ENCODE measurements at regions of chr1 and their contacts with region 1.

Region 1: GRCh38 chr1:145999321-146000241 is 3.2 kb upstream of the TXNIP start:
- DNase-seq: peak; percentile 51 to 64 (median 57)
- H3K4me3 ChIP-seq: peak overlapping the region; percentile 18
- H3K27ac ChIP-seq: peak overlapping the region; percentile 37 to 74
- H3K4me1 ChIP-seq: peaks cover 5% of the 10 kb centered on the region
- H3K27me3 ChIP-seq: no peaks in the 10 kb centered on the region
- CTCF ChIP-seq: no peak
- EP300 ChIP-seq: no peak
- POLR2A ChIP-seq: no peak

Region 2: DNA sequence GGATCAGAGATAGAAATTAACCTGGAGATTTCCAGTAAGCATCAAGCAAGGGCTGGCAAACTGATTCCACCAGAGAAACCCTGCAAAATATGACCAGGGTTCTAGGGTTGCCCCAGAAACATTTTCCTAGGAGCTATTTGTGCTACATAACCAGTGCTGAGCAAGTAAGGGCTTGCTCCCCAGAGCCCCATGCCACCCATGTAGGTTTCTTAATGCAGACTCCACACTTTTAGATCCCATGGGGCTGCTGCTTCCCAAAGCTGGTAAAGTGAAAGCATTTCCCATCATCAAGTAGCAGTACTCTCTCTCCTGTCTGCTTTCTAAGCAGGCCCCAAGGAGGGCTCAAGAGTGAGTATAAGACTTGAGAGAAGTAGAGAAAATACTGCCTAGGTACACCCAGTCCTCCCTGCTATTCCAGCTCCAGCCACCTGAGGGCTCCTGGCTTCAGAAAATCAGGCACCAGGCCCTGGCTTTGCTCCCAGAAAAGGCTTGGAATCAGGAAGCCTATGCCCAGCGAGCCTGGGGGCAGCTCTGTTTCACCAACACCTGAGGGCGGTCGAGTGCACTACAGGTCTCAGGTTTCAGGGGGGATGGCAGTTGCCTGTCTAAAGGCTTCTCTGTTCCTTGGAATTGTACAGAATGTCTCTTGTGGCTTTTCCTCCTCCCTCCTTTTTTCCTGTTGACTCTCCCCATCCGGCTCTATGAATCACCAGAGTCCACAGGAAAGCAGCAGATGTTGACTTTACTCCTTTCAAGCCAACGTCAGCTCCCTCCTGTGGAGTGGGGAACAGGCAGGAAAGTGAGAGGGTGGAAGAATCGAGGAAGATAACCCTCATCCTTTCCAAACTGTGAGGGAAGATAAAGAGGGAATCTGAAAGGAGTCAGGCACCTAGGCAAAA is 107.7 kb before region 1 on chr1:
- intact Hi-C with region 1: loop called in 1 of 4 experiments (anchors 10 kb)
- DNase-seq: peak; percentile 95 to 97 (median 96)
- H3K4me3 ChIP-seq: no peak overlapping the region
- H3K27ac ChIP-seq: peak overlapping the region; percentile 78 to 82
- H3K4me1 ChIP-seq: peaks cover 8% of the 10 kb centered on the region
- H3K27me3 ChIP-seq: no peaks in the 10 kb centered on the region
- CTCF ChIP-seq: peak; percentile 92 to 98 (median 94)
- EP300 ChIP-seq: no peak
- POLR2A ChIP-seq: peak; percentile 9

Region 3: GRCh38 chr1:145949219-145949618 is 50.4 kb before region 1 on chr1:
- intact Hi-C with region 1: no loop called
- DNase-seq: no peak
- H3K4me3 ChIP-seq: no peak overlapping the region
- H3K27ac ChIP-seq: no peak overlapping the region
- H3K4me1 ChIP-seq: peaks cover 7% of the 10 kb centered on the region
- H3K27me3 ChIP-seq: no peaks in the 10 kb centered on the region
- CTCF ChIP-seq: no peak
- EP300 ChIP-seq: no peak
- POLR2A ChIP-seq: no peak

Measured in ovary (tissue), 10 donors.